Sigmoid colon (tissue), 7 donors: ENCODE measurements at regions of chr7 and their contacts with region 1.

Region 1: GRCh38 chr7:2757904-2758672 is 70.1 kb downstream of the AMZ1 start:
- DNase-seq: peak; percentile 90
- H3K4me3 ChIP-seq: peak overlapping the region in 2 of 4 donors; percentile 12 to 22
- H3K27ac ChIP-seq: peak overlapping the region; percentile 85 to 96 (median 94)
- H3K4me1 ChIP-seq: peaks cover 0 to 79% (median 70%) of the 10 kb centered on the region in 4 donors
- H3K27me3 ChIP-seq: no peaks in the 10 kb centered on the region
- CTCF ChIP-seq: no peak
- EP300 ChIP-seq: peak; percentile 55 to 91 (median 79)
- POLR2A ChIP-seq: no peak

Region 2: DNA sequence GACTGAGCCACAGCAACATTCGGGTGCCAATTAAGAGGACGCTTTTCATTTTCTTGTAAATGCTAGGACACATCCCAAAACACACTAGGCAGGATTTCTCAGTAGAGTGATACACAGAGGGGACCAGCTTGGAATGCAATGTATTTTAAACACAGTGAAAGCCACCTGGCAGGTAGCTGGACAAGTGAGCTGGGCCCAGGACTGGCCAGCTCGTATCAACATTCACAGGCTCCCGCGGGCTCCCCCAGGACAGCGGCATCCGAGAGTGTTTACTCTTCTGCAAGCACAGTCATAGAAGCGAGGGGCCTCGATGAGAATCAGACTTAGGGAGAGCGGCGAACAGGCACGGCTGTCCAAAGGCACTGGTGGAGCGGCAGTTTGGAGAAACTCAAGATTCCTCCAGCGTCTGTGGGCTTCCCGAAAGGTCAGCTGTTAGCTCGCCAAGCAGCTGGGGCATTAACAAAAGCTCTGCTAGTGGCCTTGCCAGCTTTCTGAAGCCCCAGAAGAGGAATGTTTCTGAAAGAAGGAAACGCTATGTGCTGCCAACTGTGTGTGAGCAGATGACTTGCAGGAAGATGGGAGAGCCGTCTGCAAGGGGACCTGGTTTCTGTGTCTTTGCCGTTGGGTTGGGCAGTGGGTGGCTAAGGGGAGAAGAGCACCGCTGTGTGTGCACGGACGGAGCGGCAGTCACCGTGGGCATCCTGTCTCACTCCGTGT is 28.2 kb before region 1 on chr7:
- intact Hi-C with region 1: loop called (anchors 5 kb)
- DNase-seq: peak; percentile 89
- H3K4me3 ChIP-seq: peak overlapping the region in 3 of 4 donors; percentile 24 to 35 (median 32)
- H3K27ac ChIP-seq: peak overlapping the region; percentile 63 to 92 (median 86)
- H3K4me1 ChIP-seq: peaks cover 0 to 60% (median 53%) of the 10 kb centered on the region in 4 donors
- H3K27me3 ChIP-seq: no peaks in the 10 kb centered on the region
- CTCF ChIP-seq: no peak
- EP300 ChIP-seq: peak in 2 of 4 donors; percentile 67 to 72
- POLR2A ChIP-seq: no peak

Region 3: DNA sequence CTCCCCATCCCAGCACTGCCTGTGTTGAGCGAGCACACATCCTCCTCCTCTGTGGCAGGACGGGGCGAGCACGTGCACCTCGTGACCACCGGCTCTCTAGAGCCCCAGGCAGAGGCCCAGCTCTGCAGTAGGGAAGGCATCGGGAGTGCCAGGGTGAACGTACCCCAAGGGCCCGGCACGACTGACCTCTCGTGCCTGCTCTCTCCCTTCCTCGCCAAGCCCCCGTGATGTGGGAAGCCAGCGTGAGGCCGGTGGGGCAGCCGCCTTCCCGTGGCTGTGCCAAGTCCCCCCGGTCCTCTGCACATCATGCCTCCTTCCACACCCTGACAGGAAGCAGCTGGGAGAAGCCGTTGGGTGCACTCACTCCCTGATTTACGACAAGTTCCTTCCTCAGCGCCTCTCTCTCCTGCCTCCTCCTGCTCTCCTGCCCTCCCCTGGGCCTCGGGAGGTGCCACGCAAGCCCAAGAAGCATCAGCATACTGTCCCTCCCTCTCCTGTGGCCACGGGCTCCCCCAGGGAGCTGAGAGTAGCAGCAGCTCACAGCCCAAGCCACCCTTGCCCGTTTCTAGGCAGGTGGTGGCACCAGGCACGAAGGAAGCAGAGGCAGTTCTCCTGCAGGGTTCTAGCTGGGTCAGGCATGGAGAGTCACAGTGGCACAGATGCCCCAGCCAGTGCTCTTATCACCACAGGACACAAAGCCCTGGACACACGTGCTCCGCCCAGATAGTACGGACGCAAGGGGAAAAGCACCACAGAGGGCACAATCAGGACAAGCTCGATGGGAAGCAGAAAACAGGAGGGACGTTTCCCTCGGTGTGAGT is 23.1 kb before region 1 on chr7:
- intact Hi-C with region 1: loop called (anchors 1 kb)
- DNase-seq: peak; percentile 89
- H3K4me3 ChIP-seq: peak overlapping the region in 2 of 4 donors; percentile 8 to 13
- H3K27ac ChIP-seq: peak overlapping the region in 3 of 4 donors; percentile 71 to 92 (median 90)
- H3K4me1 ChIP-seq: peaks cover 0 to 76% (median 56%) of the 10 kb centered on the region in 4 donors
- H3K27me3 ChIP-seq: no peaks in the 10 kb centered on the region
- CTCF ChIP-seq: no peak
- EP300 ChIP-seq: peak in 1 of 4 donors; percentile 55
- POLR2A ChIP-seq: no peak

Region 4: GRCh38 chr7:3520206-3520605 is 762.1 kb after region 1 on chr7:
- intact Hi-C with region 1: no loop called
- DNase-seq: no peak
- H3K4me3 ChIP-seq: no peak overlapping the region
- H3K27ac ChIP-seq: peak overlapping the region in 1 of 4 donors; percentile 17
- H3K4me1 ChIP-seq: peaks cover 0 to 20% (median 2%) of the 10 kb centered on the region in 4 donors
- H3K27me3 ChIP-seq: no peaks in the 10 kb centered on the region
- CTCF ChIP-seq: no peak
- EP300 ChIP-seq: no peak
- POLR2A ChIP-seq: no peak